Pancreas (tissue), 10 donors: ENCODE measurements at regions of chr5 and their contacts with region 1.

Region 1: DNA sequence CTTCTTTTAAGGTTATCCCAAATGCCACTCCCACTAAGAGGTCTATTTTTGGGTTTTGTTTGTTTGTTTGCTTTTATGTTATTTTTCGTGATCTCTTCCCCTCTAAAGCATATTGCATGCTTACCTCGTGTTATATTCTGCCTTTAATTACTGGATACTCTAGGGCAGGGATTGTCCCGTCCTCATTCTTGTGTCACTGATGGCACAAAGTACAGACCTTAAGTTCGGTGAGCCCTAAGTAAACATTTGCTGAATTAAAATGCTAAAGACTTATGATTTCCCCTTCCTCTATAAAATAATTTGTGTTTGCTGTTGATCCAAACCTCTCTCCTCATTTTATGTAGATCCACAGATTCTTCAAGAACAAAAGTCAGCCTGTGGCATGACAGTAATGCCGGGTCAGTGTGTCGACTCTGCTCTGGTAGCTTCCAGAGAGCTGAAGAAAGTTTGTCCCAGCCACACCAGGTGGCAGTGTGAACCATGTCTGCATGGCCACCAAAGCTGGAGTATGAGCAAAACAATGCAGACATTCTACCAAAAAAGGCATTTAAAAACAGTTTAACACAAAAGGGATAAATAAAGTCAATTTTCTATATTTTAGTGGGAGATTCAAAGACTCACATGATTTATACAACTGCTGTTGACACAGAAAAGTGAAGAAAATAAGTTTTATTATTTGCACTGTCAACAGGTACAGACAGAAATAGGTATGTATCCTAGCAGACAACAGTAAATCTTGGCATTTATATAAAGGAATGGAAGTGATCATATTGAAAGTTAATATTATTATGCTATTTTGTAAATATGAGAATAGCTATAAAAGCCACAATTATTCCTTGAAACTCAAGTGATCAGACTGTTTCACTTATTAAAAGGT is 17.9 kb upstream of the POC5 start:
- DNase-seq: peak in 4 of 6 donors; percentile 30 to 62 (median 34)
- ATAC-seq: peak; percentile 71 to 98 (median 94)
- H3K4me3 ChIP-seq: no peak overlapping the region
- H3K27ac ChIP-seq: no peak overlapping the region
- H3K4me1 ChIP-seq: no peaks in the 10 kb centered on the region
- H3K27me3 ChIP-seq: no peaks in the 10 kb centered on the region
- CTCF ChIP-seq: peak in 2 of 4 donors; percentile 37 to 40

Region 2: DNA sequence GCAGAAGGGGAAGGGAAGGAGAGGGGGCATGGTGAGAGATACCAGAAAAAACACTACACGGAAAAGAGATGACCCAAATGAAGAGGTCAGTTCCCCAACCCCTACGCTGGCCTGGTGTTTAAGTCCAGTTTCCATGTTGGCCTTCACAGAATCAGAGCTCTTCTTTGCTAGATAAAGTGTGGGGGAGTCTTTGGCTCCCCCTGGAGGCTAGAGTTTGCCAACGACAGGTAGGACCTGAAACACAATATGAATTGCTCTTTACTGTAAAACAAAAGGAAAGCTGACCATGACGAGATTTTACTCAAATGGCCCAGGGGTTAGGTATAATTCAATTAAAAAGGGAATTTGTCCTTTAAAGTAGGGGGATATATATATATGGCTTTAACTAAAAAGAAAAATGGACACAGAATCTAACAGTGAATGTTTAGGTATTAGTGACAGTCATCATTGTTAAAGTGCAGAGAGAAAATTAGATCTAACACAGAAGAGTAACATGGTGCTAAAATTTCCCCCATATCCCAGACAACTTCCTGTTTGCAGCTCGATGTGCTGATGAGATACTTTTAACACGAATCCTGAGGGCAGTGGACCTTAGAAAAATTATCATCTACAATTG is 440.0 kb after region 1 on chr5:
- intact Hi-C with region 1: loop called in 1 of 3 experiments (anchors 10 kb)
- DNase-seq: peak in 5 of 6 donors; percentile 20 to 67 (median 49)
- ATAC-seq: peak in 3 of 4 donors; percentile 88 to 91 (median 90)
- H3K4me3 ChIP-seq: no peak overlapping the region
- H3K27ac ChIP-seq: no peak overlapping the region
- H3K4me1 ChIP-seq: no peaks in the 10 kb centered on the region
- H3K27me3 ChIP-seq: no peaks in the 10 kb centered on the region
- CTCF ChIP-seq: peak; percentile 64 to 70 (median 67)

Region 3: GRCh38 chr5:76256116-76256889 is 521.2 kb after region 1 on chr5:
- intact Hi-C with region 1: loop called in 2 of 3 experiments (anchors 5 to 10 kb)
- DNase-seq: peak in 3 of 6 donors; percentile 31 to 62 (median 50)
- ATAC-seq: peak; percentile 78 to 98 (median 98)
- H3K4me3 ChIP-seq: no peak overlapping the region
- H3K27ac ChIP-seq: no peak overlapping the region
- H3K4me1 ChIP-seq: peaks cover 0 to 2% (median 0%) of the 10 kb centered on the region in 3 donors
- H3K27me3 ChIP-seq: peaks cover 0 to 2% (median 0%) of the 10 kb centered on the region in 4 donors
- CTCF ChIP-seq: peak in 3 of 4 donors; percentile 39 to 48 (median 46)